Transverse colon (tissue), 4 donors: ENCODE measurements at regions of chr6 and their contacts with region 1.

Region 1: GRCh38 chr6:53869952-53870351 is 75.1 kb downstream of the LRRC1 start:
- DNase-seq: no peak
- H3K4me3 ChIP-seq: no peak overlapping the region
- H3K27ac ChIP-seq: no peak overlapping the region
- H3K4me1 ChIP-seq: peaks cover 0 to 2% (median 0%) of the 10 kb centered on the region in 4 donors
- H3K27me3 ChIP-seq: no peaks in the 10 kb centered on the region
- CTCF ChIP-seq: no peak
- EP300 ChIP-seq: no peak
- POLR2A ChIP-seq: no peak

Region 2: DNA sequence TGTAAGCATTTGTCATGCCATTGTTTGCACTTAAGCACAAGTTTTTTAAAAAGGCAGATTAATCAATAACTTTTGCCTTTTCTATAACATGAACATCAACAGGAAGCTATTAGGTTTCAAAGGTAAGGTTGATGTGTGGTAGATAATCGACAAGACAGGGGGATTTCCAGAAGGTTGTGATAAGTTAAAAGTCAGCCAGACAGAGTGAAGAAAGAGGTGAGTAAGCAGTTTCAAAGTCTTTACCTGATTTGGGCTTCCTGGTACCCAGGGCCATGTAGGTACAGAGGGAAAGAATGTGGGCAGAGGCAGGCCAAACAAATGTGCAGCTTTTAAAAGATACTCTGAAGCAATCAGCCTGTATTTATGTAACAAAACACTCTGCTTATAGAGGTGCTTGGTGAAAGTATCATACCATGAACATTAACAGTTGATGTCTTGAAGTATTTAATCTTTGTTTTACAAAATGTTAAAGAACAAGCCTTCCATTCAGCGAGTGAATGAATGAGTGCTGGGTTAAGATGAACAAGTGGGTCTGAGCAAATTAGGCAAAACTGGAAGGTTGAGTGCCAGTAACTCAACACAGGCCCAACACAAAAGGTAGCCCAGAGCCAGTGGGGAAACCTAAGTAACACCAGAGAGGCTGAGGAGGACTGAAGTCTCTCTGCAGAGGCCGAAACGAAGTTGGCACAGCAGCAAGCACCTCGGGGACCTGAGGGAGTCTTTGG is 14.9 kb before region 1 on chr6:
- in situ Hi-C with region 1: no loop called
- intact Hi-C with region 1: loop called (anchors 1 kb)
- DNase-seq: no peak
- H3K4me3 ChIP-seq: no peak overlapping the region
- H3K27ac ChIP-seq: no peak overlapping the region
- H3K4me1 ChIP-seq: peaks cover 0 to 20% (median 0%) of the 10 kb centered on the region in 4 donors
- H3K27me3 ChIP-seq: no peaks in the 10 kb centered on the region
- CTCF ChIP-seq: no peak
- EP300 ChIP-seq: no peak
- POLR2A ChIP-seq: no peak